ENCODE measurements at regions of chr18 and their contacts with region 1.

Region 1: GRCh38 chr18:47748847-47749599 is 181.4 kb downstream of the SMAD2 start:
- DNase-seq: peak; percentile 60
- H3K4me3 Mint-ChIP-seq: peak overlapping the region; percentile 59
- H3K27ac Mint-ChIP-seq: peak overlapping the region; percentile 49
- H3K4me1 Mint-ChIP-seq: no peaks in the 10 kb centered on the region
- H3K27me3 Mint-ChIP-seq: peaks cover 15% of the 10 kb centered on the region
- CTCF ChIP-seq: peak; percentile 99

Region 2: DNA sequence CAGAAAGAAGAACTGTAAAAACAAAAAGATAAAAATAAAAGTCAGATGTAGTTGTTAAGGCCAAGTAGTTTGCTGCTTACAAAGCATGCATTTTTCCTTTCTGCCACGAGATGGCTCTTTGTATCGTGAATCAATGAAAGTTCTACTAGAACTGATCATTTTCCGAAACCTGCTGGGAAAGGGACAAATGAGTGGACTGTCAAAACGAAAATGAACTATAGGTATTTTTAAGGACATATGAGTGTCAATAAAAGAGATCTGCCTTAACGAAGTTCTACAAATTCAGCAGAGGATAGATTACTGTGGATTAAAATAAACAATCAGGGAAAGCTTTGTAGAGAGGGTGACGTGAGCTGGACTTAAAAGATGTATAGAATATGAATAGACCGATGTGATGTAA is 698.6 kb before region 1 on chr18:
- CTCF ChIA-PET with region 1: interaction called, 15 read pairs
- POLR2A ChIA-PET with region 1: no interaction called
- intact Hi-C with region 1: loop called (anchors 5 kb)
- DNase-seq: peak; percentile 60
- H3K4me3 Mint-ChIP-seq: no peak overlapping the region
- H3K27ac Mint-ChIP-seq: no peak overlapping the region
- H3K4me1 Mint-ChIP-seq: peaks cover 5% of the 10 kb centered on the region
- H3K27me3 Mint-ChIP-seq: peaks cover 14% of the 10 kb centered on the region
- CTCF ChIP-seq: peak; percentile 71

Region 3: DNA sequence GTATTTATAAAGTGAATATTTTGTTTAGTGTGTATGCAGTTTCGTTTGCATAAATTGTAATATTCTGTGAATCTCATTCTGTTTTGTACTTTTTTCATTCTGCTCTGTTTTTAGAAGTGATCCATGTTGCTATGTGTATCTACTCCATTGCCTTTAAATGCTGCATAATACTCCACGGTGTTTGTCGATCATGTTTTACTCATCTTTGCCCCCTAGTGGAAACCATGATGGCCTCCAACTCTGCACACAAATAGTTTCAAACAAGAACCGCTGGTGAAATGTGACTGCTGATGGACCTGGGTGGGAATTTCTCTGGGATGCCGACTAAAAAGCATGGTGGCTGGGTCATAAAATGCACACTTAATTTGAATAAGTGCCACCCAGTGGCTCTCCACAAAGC is 465.5 kb before region 1 on chr18:
- CTCF ChIA-PET with region 1: no interaction called
- POLR2A ChIA-PET with region 1: no interaction called
- intact Hi-C with region 1: loop called (anchors 5 kb)
- DNase-seq: peak; percentile 63
- H3K4me3 Mint-ChIP-seq: no peak overlapping the region
- H3K27ac Mint-ChIP-seq: no peak overlapping the region
- H3K4me1 Mint-ChIP-seq: no peaks in the 10 kb centered on the region
- H3K27me3 Mint-ChIP-seq: peaks cover 86% of the 10 kb centered on the region
- CTCF ChIP-seq: peak; percentile 36

Measured in MCF 10A (cell line).